Activated CD4-positive, alpha-beta memory T cell treated with anti-CD3 and anti-CD28 coated beads, Interleukin-2, amount 10 ng/mL, durations not matched to agents 7 days and 5 days (primary cell): ENCODE measurements at regions of chr13 and their contacts with region 1.

Region 1: GRCh38 chr13:30465585-30466357 is at the start of gene HMGB1:
- DNase-seq: peak; percentile 99
- H3K4me3 Mint-ChIP-seq: peak within 1 kb of the TSS; percentile 96
- H3K27ac Mint-ChIP-seq: peak within 1 kb of the TSS; percentile 100
- H3K4me1 Mint-ChIP-seq: peaks cover 36% of the 10 kb centered on the region
- H3K27me3 Mint-ChIP-seq: peaks cover 2% of the 10 kb centered on the region
- total RNA-seq, gene HMGB1: 611 to 615 TPM

Region 2: DNA sequence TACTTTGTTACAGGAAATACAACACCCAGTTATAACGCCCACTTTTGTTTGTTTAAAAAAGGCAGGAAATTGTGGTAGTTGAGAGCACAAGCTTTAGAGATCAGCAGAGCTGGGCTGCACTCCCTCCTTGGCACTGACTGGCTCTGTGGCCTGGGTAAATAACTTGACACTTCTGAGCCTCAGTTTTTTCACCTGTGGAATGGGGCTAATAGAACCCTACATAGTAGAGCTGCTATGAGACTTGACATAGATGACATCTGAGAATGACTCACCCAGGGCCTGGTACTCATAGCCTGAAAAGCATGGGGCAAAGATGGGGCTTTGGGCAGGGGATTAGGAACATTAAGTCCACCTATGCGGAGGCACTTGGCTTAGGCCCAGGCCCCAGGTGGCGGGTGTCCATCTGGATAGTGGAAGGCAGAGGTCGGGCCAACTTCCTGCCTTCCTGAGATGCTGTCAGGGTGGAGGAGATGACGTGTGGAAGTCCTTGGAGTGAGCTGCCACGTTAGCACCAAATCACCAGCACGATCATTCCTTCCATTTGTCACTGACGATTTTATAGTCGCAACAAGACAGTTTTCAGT is 317.5 kb before region 1 on chr13:
- CTCF ChIA-PET with region 1: no interaction called
- POLR2A ChIA-PET with region 1: interaction called, 21 read pairs
- DNase-seq: peak; percentile 75
- H3K4me3 Mint-ChIP-seq: peak overlapping the region; percentile 5
- H3K27ac Mint-ChIP-seq: peak overlapping the region; percentile 96
- H3K4me1 Mint-ChIP-seq: peaks cover 90% of the 10 kb centered on the region
- H3K27me3 Mint-ChIP-seq: no peaks in the 10 kb centered on the region

Region 3: DNA sequence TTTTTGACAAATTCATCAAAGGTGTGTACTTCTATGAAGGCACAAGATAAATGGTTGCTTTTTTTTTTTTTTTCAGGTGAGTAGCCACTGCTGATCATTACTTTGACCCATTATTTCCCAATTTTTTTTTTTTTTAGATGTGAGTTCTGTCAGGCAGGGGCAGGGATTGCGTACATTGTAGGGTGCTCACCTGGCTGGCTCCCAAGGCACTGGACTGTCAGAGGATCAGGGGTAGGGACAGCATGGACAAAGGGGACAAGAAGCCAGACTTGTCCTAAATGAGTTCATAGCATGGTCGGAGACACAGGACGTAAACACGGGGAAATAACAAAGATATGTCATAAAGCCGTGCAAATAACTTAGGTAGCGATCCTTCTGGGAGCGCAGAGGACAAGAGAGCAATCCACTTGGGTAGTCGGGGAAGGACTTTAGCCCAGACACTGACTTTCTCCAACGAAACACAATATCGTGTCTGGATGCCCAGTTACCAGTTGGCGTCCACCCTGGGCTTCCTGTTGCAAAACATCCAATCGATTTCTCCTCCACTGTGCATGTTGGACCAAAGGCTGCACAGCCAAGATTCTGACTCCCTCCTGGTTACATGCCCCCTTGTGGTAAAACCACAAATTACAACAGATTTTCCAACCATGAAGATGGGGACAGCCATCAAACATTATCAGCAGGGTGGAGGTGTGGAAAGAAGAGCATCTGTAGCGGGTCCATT is 130.9 kb before region 1 on chr13:
- CTCF ChIA-PET with region 1: no interaction called
- POLR2A ChIA-PET with region 1: no interaction called
- DNase-seq: peak; percentile 21
- H3K4me3 Mint-ChIP-seq: no peak overlapping the region
- H3K27ac Mint-ChIP-seq: no peak overlapping the region
- H3K4me1 Mint-ChIP-seq: peaks cover 17% of the 10 kb centered on the region
- H3K27me3 Mint-ChIP-seq: no peaks in the 10 kb centered on the region

Region 4: DNA sequence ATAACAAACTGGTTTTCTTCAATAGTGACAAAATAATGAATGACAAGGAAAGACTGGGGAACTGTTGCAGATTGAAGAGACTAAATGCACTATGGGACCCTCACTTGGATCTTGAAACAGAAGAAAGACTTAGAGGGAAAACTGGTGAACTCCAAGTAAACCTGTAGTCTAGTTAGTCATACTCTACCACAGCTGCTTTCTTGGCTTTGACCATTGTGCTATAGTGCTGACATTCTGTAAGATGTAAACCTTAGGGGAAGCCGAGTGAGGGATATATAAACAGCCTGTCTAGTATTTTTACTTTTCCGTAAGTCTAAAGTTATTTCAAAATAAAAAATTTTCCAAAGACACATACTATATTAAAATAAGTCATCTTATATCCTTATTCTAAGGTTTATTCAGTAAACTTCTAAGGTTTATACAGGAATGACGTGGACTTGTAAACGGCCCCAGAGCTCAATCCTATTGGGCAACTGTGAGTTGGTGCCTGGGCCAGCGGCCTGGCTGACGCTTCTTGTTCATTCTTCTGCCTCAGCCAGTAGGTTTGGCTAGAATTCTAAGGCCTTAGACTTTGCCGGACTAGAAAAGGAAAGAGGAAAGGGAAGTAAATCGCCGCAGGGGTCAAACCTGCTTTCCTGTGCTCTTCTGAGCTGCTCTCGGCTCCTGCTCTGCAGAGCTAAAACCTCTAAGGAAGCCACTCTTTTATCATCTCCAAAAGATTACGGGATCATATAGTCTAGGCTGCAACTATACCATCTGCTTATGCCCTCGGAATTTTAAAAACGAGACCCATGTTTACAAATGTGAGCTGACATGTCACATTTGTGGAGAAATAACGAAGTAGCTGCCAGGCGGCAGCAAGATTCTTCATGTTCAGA is 77.1 kb before region 1 on chr13:
- CTCF ChIA-PET with region 1: no interaction called
- POLR2A ChIA-PET with region 1: interaction called, 32 read pairs
- DNase-seq: no peak
- H3K4me3 Mint-ChIP-seq: peak overlapping the region; percentile 48
- H3K27ac Mint-ChIP-seq: peak overlapping the region; percentile 83
- H3K4me1 Mint-ChIP-seq: peaks cover 26% of the 10 kb centered on the region
- H3K27me3 Mint-ChIP-seq: no peaks in the 10 kb centered on the region

Region 5: DNA sequence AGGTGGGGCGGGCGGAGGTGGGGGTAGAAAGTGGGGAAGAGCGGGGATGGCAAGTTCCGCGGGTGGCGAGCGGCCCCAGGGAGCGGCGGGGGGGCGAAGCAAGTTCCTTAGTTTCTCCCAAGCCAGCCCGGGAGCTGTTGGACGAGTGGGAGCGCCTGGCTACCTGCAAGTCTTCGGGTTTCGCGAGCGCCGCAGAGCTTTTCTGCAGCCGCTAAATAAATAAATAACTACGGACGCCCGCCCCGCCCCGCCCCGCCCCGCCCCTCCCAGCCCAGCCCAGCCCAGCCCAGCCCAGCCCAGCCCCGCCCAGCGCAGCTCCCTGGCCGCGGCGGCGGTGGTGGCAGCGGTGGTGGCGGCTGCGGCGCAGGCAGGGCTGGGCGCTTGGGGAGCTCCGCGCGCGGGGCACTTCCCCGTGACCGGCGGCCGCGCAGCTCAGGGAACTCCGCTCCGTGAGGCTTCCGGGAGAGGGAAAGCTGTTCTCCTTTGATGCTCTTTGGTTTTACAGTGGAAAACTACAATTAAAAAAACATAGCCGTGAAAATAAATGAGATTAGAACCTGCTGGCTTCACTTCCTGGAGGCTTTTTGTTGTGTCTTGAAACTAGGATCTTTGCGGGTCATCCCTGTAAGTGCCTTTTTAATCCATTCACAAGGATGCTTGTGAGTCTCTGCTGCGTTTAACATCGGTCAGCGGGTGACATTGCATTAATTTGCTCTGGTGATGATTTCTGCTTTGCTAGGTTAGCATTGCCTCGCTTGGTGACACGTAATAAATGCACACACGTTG is 43.5 kb before region 1 on chr13 and contains the start of gene UBE2L5:
- CTCF ChIA-PET with region 1: no interaction called
- POLR2A ChIA-PET with region 1: interaction called, 14 read pairs
- DNase-seq: peak; percentile 80
- H3K4me3 Mint-ChIP-seq: peak within 1 kb of the TSS; percentile 77
- H3K27ac Mint-ChIP-seq: peak within 1 kb of the TSS; percentile 73
- H3K4me1 Mint-ChIP-seq: peaks cover 15% of the 10 kb centered on the region
- H3K27me3 Mint-ChIP-seq: peaks cover 4% of the 10 kb centered on the region
- total RNA-seq, gene UBE2L5: 0.20 TPM in 1 of 2 experiments, not detected in the other

Region 6: DNA sequence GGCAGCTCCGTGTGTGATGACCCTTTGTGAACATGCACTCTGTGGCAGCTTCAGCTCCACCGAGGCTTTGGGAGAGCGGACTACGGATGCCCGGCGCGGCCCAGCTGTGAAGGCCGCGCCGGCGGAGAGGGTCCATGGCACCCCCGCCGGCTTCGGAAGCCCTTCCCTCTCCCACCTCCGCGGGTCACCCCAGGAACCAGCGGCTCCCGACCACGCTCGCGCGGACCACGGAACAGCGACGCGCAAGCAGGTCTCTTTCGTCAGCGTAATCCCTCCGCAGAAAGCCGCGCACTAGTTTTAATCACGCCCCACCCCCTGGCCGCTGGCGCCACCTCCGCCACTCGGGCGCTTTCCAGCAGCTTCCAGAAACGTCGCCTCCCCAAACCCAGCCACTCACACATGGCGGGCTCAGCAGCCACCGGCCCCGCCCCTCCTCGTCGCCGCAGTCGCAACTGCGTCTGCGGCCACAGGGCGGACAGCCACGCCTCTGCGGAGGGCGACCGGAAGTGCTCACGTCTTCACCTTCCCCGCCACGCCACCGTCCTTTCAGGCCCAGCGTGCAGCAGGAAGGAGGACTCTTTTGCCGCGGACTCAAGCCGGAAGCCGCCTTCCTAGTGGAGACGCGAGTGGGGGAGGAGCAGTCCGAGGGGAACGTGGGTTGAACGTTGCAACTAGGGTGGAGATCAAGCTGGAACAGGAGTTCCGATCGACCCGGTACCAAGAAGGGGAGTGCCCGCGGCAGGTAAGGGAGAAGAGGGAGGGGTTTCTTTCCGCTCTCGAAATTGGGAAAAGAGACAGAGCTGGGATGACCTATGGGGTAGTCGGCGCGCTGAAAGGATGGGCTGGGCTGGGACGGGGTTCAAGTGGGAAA is 151.8 kb after region 1 on chr13 and contains the start of gene USPL1:
- CTCF ChIA-PET with region 1: interaction called, 5 read pairs
- POLR2A ChIA-PET with region 1: interaction called, 115 read pairs
- DNase-seq: peak; percentile 99
- H3K4me3 Mint-ChIP-seq: no peak within 1 kb of the TSS
- H3K27ac Mint-ChIP-seq: no peak within 1 kb of the TSS
- H3K4me1 Mint-ChIP-seq: peaks cover 23% of the 10 kb centered on the region
- H3K27me3 Mint-ChIP-seq: no peaks in the 10 kb centered on the region
- total RNA-seq, gene USPL1: 19.7 to 21.8 TPM